Naive thymus-derived CD4-positive, alpha-beta T cell (primary cell): ENCODE measurements at regions of chr1 and their contacts with region 1.

Region 1: DNA sequence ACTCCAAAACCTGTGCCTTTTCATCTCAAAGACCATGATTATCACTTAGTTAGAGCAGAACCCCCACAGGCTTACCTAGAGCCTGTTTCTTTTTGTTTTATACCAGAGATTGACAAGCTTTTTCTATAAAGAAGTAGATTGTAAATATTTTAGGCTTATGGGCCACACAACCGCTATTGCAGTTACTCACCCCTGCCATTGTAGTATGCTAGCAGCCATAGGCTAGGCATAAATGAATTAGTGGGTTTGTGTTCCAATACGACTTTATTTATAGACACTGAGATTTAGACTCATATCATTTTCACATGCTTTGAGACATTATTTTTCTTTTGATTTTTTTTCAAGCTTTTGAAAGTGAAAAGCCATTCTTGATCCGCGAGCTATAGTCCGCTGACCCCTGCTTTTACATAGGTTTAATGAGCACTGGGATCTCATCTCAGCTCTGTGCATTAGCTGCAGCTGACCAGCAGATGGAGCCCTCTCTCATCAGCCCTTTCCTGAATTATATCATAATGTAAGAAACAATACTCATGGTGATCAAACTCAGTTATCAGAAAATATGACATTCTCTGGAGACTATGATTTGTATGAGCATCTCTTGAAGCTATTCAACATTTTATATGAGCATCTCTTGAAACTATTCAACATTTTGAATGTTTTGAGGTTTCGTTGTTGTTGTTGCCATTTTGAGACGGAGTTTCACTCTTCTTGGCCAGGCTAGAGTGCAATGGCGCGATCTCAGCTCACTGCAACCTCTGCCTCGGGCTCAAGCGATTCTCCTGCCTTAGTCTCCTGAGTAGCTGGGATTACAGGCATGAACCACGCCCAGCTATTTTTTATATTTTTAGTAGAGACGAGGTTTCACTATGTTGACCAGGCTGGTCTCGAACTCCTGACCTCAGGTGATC is 111.9 kb upstream of the L1TD1 start:
- DNase-seq: peak in 5 of 9 donors; percentile 16 to 29 (median 24)
- ATAC-seq: peak; percentile 73
- H3K4me3 ChIP-seq: no peak overlapping the region
- H3K4me3 Mint-ChIP-seq: no peak overlapping the region
- H3K27ac ChIP-seq: no peak overlapping the region
- H3K27ac Mint-ChIP-seq: peak overlapping the region in 1 of 9 donors; percentile 17
- H3K4me1 ChIP-seq: no peaks in the 10 kb centered on the region
- H3K4me1 Mint-ChIP-seq: peaks cover 0 to 1% (median 0%) of the 10 kb centered on the region in 7 donors
- H3K27me3 ChIP-seq: no peaks in the 10 kb centered on the region
- H3K27me3 Mint-ChIP-seq: no peaks in the 10 kb centered on the region

Region 2: DNA sequence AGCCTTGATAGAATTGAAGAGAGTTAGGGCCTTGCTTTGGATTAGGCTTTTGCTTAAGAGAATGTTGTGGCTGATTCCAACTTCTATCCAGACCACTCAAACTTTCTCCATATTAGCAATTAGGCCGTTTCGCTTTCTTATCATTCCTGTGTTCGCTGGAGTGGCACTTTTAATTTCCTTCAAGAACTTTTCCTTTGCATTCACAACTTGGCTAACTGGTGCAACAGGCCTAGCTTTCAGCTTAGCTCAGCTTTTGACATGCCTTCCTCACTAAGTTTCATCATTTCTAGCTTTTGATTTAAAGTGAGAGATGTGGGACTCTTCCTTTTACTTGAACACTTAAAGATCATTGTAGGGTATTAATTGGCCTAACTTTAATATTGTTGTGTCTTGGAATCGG is 71.7 kb before region 1 on chr1:
- CTCF ChIA-PET with region 1: no interaction called
- POLR2A ChIA-PET with region 1: no interaction called
- intact Hi-C with region 1: no loop called
- DNase-seq: no peak
- ATAC-seq: no peak
- H3K4me3 ChIP-seq: no peak overlapping the region
- H3K4me3 Mint-ChIP-seq: no peak overlapping the region
- H3K27ac ChIP-seq: no peak overlapping the region
- H3K27ac Mint-ChIP-seq: no peak overlapping the region
- H3K4me1 ChIP-seq: no peaks in the 10 kb centered on the region
- H3K4me1 Mint-ChIP-seq: peaks cover 0 to 6% (median 0%) of the 10 kb centered on the region in 7 donors
- H3K27me3 ChIP-seq: no peaks in the 10 kb centered on the region
- H3K27me3 Mint-ChIP-seq: no peaks in the 10 kb centered on the region

Region 3: DNA sequence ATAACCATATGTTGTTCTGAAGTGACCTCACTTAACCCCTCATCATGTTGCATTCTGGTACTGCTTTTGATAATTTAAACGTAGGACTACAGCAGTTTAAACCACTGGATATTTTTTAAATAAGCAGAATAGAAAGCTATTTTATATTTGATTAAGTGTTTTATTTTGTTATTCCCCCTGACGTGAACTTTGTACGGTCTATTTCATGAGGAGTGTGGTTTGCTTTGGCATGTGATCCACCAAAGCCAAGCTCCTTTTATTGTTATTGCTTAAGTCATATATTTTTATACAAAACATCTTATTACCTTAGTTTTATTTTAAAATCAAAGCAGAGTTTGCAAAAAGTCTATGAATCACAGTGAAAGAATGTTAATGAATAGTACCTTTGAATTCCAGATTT is 10.6 kb after region 1 on chr1:
- CTCF ChIA-PET with region 1: interaction called, 12 read pairs
- POLR2A ChIA-PET with region 1: no interaction called
- intact Hi-C with region 1: no loop called
- DNase-seq: no peak
- ATAC-seq: no peak
- H3K4me3 ChIP-seq: no peak overlapping the region
- H3K4me3 Mint-ChIP-seq: no peak overlapping the region
- H3K27ac ChIP-seq: no peak overlapping the region
- H3K27ac Mint-ChIP-seq: no peak overlapping the region
- H3K4me1 ChIP-seq: no peaks in the 10 kb centered on the region
- H3K4me1 Mint-ChIP-seq: peaks cover 0 to 1% (median 0%) of the 10 kb centered on the region in 7 donors
- H3K27me3 ChIP-seq: no peaks in the 10 kb centered on the region
- H3K27me3 Mint-ChIP-seq: no peaks in the 10 kb centered on the region

Region 4: DNA sequence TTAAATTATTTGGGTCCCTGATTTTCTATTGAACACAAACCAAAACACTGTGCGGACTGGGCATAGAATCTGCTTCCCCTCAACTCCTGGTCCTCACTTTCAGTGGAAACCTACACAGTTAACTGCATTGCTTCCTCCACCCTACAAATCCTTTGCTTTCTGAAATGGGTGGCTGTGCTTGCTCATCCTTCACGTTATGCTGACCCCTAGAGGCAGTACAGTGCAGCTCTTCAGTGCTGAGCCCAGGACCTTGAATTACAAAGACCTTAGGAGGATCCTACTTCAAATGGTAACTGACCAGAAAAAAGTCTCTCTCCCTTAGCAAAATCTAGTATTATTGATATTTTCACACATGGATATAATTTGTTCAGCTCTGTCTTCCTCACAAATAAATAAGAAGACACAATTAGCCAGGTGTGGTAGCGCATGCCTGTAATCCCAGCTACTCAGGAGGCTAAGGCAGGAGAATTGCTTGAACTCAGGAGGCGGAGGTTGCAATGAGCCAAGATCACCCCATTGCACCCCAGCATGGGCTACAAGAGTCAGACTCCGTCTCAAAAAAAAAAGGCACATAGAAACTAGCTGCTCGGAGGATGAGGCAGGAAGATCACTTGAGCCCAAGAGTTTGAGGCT is 48.5 kb after region 1 on chr1:
- CTCF ChIA-PET with region 1: interaction called, 6 read pairs
- POLR2A ChIA-PET with region 1: no interaction called
- intact Hi-C with region 1: loop called (anchors 1 kb)
- DNase-seq: peak in 5 of 9 donors; percentile 2 to 19 (median 7)
- ATAC-seq: peak; percentile 80
- H3K4me3 ChIP-seq: no peak overlapping the region
- H3K4me3 Mint-ChIP-seq: no peak overlapping the region
- H3K27ac ChIP-seq: no peak overlapping the region
- H3K27ac Mint-ChIP-seq: peak overlapping the region in 1 of 9 donors; percentile 36
- H3K4me1 ChIP-seq: no peaks in the 10 kb centered on the region
- H3K4me1 Mint-ChIP-seq: no peaks in the 10 kb centered on the region
- H3K27me3 ChIP-seq: no peaks in the 10 kb centered on the region
- H3K27me3 Mint-ChIP-seq: no peaks in the 10 kb centered on the region

Region 5: GRCh38 chr1:62144238-62144831 is 61.6 kb after region 1 on chr1:
- CTCF ChIA-PET with region 1: interaction called, 3 read pairs
- POLR2A ChIA-PET with region 1: no interaction called
- intact Hi-C with region 1: loop called in 1 of 2 experiments (anchors 1 kb)
- DNase-seq: peak in 6 of 9 donors; percentile 1 to 28 (median 16)
- ATAC-seq: peak; percentile 37
- H3K4me3 ChIP-seq: no peak overlapping the region
- H3K4me3 Mint-ChIP-seq: no peak overlapping the region
- H3K27ac ChIP-seq: no peak overlapping the region
- H3K27ac Mint-ChIP-seq: no peak overlapping the region
- H3K4me1 ChIP-seq: no peaks in the 10 kb centered on the region
- H3K4me1 Mint-ChIP-seq: peaks cover 0 to 5% (median 0%) of the 10 kb centered on the region in 7 donors
- H3K27me3 ChIP-seq: no peaks in the 10 kb centered on the region
- H3K27me3 Mint-ChIP-seq: no peaks in the 10 kb centered on the region

Region 6: GRCh38 chr1:62159940-62160348 is 77.2 kb after region 1 on chr1:
- CTCF ChIA-PET with region 1: no interaction called
- POLR2A ChIA-PET with region 1: no interaction called
- intact Hi-C with region 1: no loop called
- DNase-seq: no peak
- ATAC-seq: no peak
- H3K4me3 ChIP-seq: no peak overlapping the region
- H3K4me3 Mint-ChIP-seq: no peak overlapping the region
- H3K27ac ChIP-seq: no peak overlapping the region
- H3K27ac Mint-ChIP-seq: no peak overlapping the region
- H3K4me1 ChIP-seq: no peaks in the 10 kb centered on the region
- H3K4me1 Mint-ChIP-seq: no peaks in the 10 kb centered on the region
- H3K27me3 ChIP-seq: no peaks in the 10 kb centered on the region
- H3K27me3 Mint-ChIP-seq: no peaks in the 10 kb centered on the region

Region 7: DNA sequence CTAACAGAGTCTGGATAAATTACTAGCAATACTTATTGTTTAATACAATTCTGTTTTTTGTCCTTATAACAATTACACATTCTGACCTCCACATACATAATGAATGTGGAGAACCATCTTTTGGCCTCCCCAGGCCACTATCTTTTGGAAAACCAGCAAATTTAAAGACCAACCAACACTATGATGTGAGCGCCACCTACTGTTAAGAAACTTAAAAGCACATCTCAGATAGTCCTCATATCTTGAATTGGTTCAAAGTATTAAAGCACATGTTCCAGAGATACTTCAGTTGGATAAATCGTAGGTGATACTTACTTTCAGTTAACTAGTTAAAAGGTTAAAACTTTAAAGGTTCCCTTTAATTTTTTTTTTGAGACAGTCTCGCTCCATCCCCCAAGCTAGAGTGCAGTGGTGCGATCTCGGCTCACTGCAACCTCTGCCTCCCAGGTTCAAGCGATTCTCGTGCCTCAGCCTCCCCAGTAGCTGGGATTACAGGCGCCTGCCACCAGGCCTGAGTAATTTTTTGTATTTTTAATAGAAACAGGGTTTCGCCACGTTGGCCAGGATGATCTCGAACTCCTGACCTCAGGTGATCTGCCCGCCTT is 324.8 kb after region 1 on chr1:
- CTCF ChIA-PET with region 1: no interaction called
- POLR2A ChIA-PET with region 1: no interaction called
- intact Hi-C with region 1: loop called in 1 of 2 experiments (anchors 1 kb)
- DNase-seq: peak in 6 of 9 donors; percentile 30 to 64 (median 50)
- ATAC-seq: peak; percentile 70
- H3K4me3 ChIP-seq: no peak overlapping the region
- H3K4me3 Mint-ChIP-seq: no peak overlapping the region
- H3K27ac ChIP-seq: no peak overlapping the region
- H3K27ac Mint-ChIP-seq: peak overlapping the region in 1 of 9 donors; percentile 1
- H3K4me1 ChIP-seq: no peaks in the 10 kb centered on the region
- H3K4me1 Mint-ChIP-seq: no peaks in the 10 kb centered on the region
- H3K27me3 ChIP-seq: no peaks in the 10 kb centered on the region
- H3K27me3 Mint-ChIP-seq: peaks cover 0 to 6% (median 0%) of the 10 kb centered on the region in 5 donors

Region 8: GRCh38 chr1:62746085-62746808 is 663.5 kb after region 1 on chr1:
- CTCF ChIA-PET with region 1: no interaction called
- POLR2A ChIA-PET with region 1: no interaction called
- intact Hi-C with region 1: loop called in 1 of 2 experiments (anchors 1 kb)
- DNase-seq: peak in 5 of 9 donors; percentile 26 to 48 (median 38)
- ATAC-seq: peak; percentile 29
- H3K4me3 ChIP-seq: no peak overlapping the region
- H3K4me3 Mint-ChIP-seq: no peak overlapping the region
- H3K27ac ChIP-seq: no peak overlapping the region
- H3K27ac Mint-ChIP-seq: no peak overlapping the region
- H3K4me1 ChIP-seq: no peaks in the 10 kb centered on the region
- H3K4me1 Mint-ChIP-seq: no peaks in the 10 kb centered on the region
- H3K27me3 ChIP-seq: no peaks in the 10 kb centered on the region
- H3K27me3 Mint-ChIP-seq: peaks cover 0 to 28% (median 9%) of the 10 kb centered on the region in 5 donors